ENCODE measurements at regions of chr1 and their contacts with region 1.

Region 1: GRCh38 chr1:179293340-179294327 is at the start of gene SOAT1:
- DNase-seq: peak; percentile 91
- H3K4me3 ChIP-seq: peak within 1 kb of the TSS; percentile 82 to 94 (median 92)
- H3K27ac ChIP-seq: peak within 1 kb of the TSS; percentile 46
- H3K4me1 ChIP-seq: peaks cover 14% of the 10 kb centered on the region
- H3K27me3 ChIP-seq: no peaks in the 10 kb centered on the region
- CTCF ChIP-seq: peak; percentile 4 to 43
- POLR2A ChIP-seq: no peak
- total RNA-seq, gene SOAT1: 34.2 and 38.2 TPM in 2 replicates

Region 2: DNA sequence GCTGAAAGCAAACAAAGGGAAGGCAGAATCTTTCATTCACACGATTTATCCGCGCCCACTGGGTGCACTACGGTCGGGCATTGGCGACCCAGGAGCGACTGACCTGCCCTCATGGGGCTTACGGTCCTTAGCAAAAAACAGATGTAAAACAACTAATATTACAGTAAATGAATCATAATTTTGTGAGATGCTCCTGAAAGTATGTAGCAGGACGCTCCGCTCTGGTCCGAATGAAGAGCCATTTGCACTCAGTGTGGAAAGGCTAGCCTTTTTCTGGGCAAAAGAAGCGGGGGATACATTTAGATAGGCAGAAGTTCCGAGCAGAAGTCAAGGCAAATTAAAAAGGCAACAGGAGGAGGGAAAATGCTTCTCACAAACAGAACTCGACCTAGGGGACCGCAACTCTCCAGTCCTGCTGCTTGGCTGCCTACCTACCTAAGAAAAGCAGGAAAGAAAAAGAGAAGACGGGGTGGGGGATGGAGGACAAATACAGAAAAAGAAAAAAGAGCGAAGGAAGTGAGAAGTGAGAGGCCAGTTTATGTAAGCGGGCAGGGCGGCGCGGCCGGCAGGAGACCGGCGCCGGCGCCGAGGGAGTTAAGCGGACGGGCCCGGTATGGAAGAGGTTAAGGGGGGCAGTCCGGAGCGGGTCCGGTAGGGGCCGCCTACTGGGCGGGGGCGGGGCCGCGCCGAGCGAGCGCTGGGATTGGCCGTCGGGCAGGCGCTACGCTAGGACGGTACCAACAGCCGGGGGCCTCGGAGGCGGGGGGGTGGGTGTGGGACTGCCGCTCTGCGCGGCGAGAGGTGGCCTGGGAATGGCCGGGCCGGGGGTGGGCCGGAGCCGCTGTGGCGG is 268.3 kb before region 1 on chr1 and contains the start of gene FAM20B:
- CTCF ChIA-PET with region 1: no interaction called
- POLR2A ChIA-PET with region 1: no interaction called
- dilution Hi-C with region 1: no loop called
- intact Hi-C with region 1: loop called (anchors 5 kb)
- DNase-seq: peak; percentile 92
- H3K4me3 ChIP-seq: peak within 1 kb of the TSS; percentile 71 to 92 (median 78)
- H3K27ac ChIP-seq: peak within 1 kb of the TSS; percentile 71
- H3K4me1 ChIP-seq: peaks cover 13% of the 10 kb centered on the region
- H3K27me3 ChIP-seq: peaks cover 10 to 21% of the 10 kb centered on the region in 2 experiments
- CTCF ChIP-seq: no peak
- POLR2A ChIP-seq: peak; percentile 6
- total RNA-seq, gene FAM20B: 35.1 and 36.2 TPM in 2 replicates

Region 3: GRCh38 chr1:179121159-179121938 is 172.3 kb before region 1 on chr1:
- CTCF ChIA-PET with region 1: interaction called, 30 read pairs
- POLR2A ChIA-PET with region 1: no interaction called
- dilution Hi-C with region 1: no loop called
- intact Hi-C with region 1: loop called (anchors 1 kb)
- DNase-seq: no peak
- H3K4me3 ChIP-seq: no peak overlapping the region
- H3K27ac ChIP-seq: no peak overlapping the region
- H3K4me1 ChIP-seq: peaks cover 13% of the 10 kb centered on the region
- H3K27me3 ChIP-seq: no peaks in the 10 kb centered on the region
- CTCF ChIP-seq: peak; percentile 25 to 39
- POLR2A ChIP-seq: no peak

Region 4: GRCh38 chr1:179142889-179143299 is 150.7 kb before region 1 on chr1:
- CTCF ChIA-PET with region 1: no interaction called
- POLR2A ChIA-PET with region 1: no interaction called
- dilution Hi-C with region 1: no loop called
- intact Hi-C with region 1: loop called (anchors 1 kb)
- DNase-seq: peak; percentile 97
- H3K4me3 ChIP-seq: peak overlapping the region; percentile 83 to 99 (median 87)
- H3K27ac ChIP-seq: peak overlapping the region; percentile 95
- H3K4me1 ChIP-seq: peaks cover 49% of the 10 kb centered on the region
- H3K27me3 ChIP-seq: no peaks in the 10 kb centered on the region
- CTCF ChIP-seq: no peak
- POLR2A ChIP-seq: peak; percentile 99

Region 5: DNA sequence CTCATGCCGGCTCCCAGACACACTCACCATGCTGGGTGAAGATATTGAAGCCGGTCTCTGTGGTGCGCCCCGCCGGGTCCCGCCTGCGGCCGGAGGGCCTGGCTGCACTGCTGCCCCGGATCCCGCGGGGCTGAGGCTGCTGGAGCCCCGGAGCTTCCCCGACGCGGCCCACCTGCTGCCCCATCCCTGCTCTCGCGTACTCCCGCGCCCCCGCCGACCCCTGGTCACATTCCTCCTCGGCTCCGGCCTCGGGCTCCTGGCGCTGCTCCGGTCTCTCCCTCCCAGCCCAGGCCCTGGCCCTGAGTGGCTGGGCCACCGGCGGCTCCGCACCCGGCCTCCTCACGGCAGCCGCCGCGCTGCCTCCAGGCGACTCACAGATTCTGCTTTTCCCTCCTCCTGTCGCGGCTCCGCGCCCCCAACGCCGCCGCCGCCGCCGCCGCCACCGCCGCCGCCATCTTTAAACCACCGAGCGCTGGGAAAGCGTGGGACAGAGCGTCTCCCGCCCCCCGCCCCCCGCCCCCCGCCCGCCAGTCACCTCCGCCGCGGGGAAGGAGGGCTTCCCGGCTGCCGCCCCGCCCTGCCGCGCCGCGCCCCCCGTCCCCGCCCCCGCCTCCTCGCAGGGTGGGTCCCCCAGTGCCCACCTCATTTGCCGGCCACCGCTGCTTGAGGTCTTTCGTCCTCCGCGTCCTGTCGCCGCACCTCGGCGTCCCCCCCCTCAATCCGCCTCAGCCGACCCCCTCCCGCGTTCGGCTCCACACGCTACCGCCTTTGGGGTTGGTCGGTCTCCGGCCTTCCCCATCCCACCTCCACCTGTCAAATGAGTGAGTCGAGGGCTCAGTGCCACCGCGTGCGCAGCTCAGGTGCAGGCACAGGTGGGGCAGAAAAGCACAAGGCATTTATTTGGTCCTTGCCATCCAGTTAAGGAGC is 64.2 kb before region 1 on chr1 and contains the start of gene ABL2:
- CTCF ChIA-PET with region 1: no interaction called
- POLR2A ChIA-PET with region 1: no interaction called
- dilution Hi-C with region 1: no loop called
- intact Hi-C with region 1: loop called (anchors 2 kb)
- DNase-seq: peak; percentile 48
- H3K4me3 ChIP-seq: peak within 1 kb of the TSS; percentile 64 to 93 (median 83)
- H3K27ac ChIP-seq: peak within 1 kb of the TSS; percentile 56
- H3K4me1 ChIP-seq: peaks cover 28% of the 10 kb centered on the region
- H3K27me3 ChIP-seq: no peaks in the 10 kb centered on the region
- CTCF ChIP-seq: no peak
- POLR2A ChIP-seq: peak; percentile 27
- total RNA-seq, gene ABL2: 158 and 165 TPM in 2 replicates

Region 6: GRCh38 chr1:179365320-179366092 is 71.9 kb after region 1 on chr1 and contains the start of gene AXDND1:
- CTCF ChIA-PET with region 1: interaction called, 9 read pairs
- POLR2A ChIA-PET with region 1: no interaction called
- dilution Hi-C with region 1: no loop called
- intact Hi-C with region 1: loop called (anchors 2 kb)
- DNase-seq: peak; percentile 86
- H3K4me3 ChIP-seq: peak within 1 kb of the TSS; percentile 79 to 85 (median 80)
- H3K27ac ChIP-seq: peak within 1 kb of the TSS; percentile 97
- H3K4me1 ChIP-seq: peaks cover 4% of the 10 kb centered on the region
- H3K27me3 ChIP-seq: peaks cover 0 to 1% of the 10 kb centered on the region in 2 experiments
- CTCF ChIP-seq: no peak
- POLR2A ChIP-seq: peak; percentile 32
- total RNA-seq, gene AXDND1: 0.67 TPM in 1 of 2 replicates, not detected in the other

Measured in endothelial cell of umbilical vein (primary cell).